ENCODE measurements at regions of chr5 and their contacts with region 1.

Region 1: DNA sequence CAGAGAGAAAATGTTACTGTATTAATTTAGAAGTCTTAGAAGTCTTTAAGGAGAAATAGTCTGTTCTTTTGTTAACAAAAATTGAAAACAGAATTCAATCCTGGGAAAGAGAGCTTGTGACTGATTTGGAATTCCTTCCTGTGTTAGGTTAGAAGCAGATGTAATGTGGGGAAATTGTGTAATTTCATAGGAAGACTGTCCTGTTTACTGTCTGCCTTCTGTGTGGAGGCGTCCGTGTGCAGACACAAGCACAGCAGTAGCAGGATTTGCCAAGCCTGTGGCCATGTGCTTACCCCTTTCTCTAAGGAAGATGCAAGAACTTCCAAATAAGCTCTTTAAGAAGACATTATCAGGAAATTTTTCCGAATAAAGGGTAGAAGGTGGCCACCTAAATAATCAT is 36.7 kb upstream of the F2R start:
- DNase-seq: no peak
- ATAC-seq: no peak
- H3K4me3 ChIP-seq: no peak overlapping the region
- H3K27ac ChIP-seq: no peak overlapping the region
- H3K4me1 ChIP-seq: no peaks in the 10 kb centered on the region
- H3K27me3 ChIP-seq: no peaks in the 10 kb centered on the region
- CTCF ChIP-seq: no peak

Region 2: DNA sequence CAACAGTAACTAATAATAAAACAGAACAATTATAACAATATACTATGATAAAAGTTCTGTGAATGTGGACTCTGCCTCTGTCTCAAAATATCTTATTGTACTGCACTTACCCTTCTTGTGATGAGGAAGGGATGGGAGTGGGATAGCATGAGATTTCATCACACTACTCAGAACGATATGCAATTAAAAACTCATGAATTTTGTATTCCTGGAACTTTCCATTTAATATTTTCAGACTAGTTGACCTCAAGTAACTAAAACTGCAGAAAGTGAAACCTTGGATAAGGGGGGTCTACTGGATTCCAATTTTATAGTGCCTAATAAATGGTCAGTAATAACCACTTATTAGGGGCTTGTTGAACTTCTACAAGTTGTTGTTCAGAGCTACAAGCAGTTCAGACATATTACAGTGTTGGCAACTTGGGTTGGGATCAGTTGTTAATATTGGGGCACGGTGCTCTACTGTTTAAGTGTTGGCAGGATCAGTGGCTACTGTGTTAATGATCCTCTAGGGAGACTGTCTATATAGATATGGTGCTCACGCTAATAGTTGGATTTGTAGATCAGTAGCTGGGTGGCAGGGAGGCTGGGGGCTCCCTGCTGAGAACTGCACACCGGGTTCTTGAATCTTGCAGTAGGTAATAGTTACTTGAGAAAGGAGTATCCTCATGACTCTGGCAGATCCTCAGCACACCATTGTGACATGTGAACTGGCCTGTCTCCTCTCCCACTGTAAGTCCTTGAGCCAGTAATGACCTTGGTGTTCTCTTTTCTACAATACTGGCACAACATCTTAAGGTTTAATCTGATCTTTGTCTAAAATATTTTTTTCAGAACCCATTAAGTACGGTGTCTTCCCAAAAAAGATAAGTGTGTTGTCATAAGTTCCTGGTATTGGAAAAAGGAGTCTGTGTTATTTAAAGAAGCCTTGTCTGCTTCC is 118.0 kb before region 1 on chr5:
- CTCF ChIA-PET with region 1: no interaction called
- POLR2A ChIA-PET with region 1: no interaction called
- in situ Hi-C with region 1: no loop called
- intact Hi-C with region 1: no loop called
- DNase-seq: no peak
- ATAC-seq: no peak
- H3K4me3 ChIP-seq: no peak overlapping the region
- H3K27ac ChIP-seq: no peak overlapping the region
- H3K4me1 ChIP-seq: no peaks in the 10 kb centered on the region
- H3K27me3 ChIP-seq: peaks cover 16% of the 10 kb centered on the region
- CTCF ChIP-seq: no peak

Region 3: DNA sequence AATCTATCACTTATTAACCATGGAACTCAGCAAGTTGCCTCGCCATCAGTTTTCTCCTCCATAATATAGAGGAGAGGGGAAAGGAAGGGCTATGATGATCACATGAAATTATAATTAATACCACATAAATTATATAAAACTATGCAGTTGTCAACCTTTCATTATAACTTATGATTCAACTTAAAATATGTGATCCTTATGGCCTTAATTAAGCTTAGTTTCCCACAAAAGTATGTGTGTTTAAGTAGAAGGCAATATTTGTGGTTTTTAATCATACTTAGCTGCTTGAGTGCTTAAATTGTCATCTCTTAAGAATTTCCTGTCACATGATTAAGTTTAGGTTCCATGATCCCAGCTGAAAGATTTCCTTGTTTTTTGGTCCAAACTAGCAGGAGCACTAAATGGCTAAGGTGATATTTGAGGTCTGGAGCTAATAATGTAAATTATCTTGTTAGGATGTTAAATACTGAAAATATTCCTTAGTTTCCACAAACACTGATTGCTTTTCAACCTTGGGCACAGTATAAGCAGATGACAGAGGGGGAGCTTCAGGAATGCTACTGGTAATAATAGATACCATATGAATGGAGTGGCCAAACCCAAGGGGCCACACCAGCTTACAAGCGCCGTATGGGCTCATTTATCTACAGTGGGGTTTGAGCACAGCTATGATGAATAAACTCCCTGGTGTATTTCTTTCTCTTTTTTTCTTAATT is 10.2 kb after region 1 on chr5:
- CTCF ChIA-PET with region 1: interaction called, 13 read pairs
- POLR2A ChIA-PET with region 1: no interaction called
- in situ Hi-C with region 1: no loop called
- intact Hi-C with region 1: no loop called
- DNase-seq: no peak
- ATAC-seq: no peak
- H3K4me3 ChIP-seq: no peak overlapping the region
- H3K27ac ChIP-seq: no peak overlapping the region
- H3K4me1 ChIP-seq: peaks cover 5% of the 10 kb centered on the region; the same call in 1 of the 2 replicates
- H3K27me3 ChIP-seq: no peaks in the 10 kb centered on the region
- CTCF ChIP-seq: no peak

Region 4: GRCh38 chr5:77586101-77586500 is 906.9 kb after region 1 on chr5:
- CTCF ChIA-PET with region 1: no interaction called
- POLR2A ChIA-PET with region 1: interaction called, 15 read pairs
- in situ Hi-C with region 1: no loop called
- intact Hi-C with region 1: no loop called
- DNase-seq: no peak
- ATAC-seq: no peak
- H3K4me3 ChIP-seq: no peak overlapping the region
- H3K27ac ChIP-seq: no peak overlapping the region
- H3K4me1 ChIP-seq: no peaks in the 10 kb centered on the region
- H3K27me3 ChIP-seq: peaks cover 14% of the 10 kb centered on the region
- CTCF ChIP-seq: no peak

Measured in Panc1 (cell line).